PC-9 (cell line): ENCODE measurements at regions of chr1 and their contacts with region 1.

Region 1: DNA sequence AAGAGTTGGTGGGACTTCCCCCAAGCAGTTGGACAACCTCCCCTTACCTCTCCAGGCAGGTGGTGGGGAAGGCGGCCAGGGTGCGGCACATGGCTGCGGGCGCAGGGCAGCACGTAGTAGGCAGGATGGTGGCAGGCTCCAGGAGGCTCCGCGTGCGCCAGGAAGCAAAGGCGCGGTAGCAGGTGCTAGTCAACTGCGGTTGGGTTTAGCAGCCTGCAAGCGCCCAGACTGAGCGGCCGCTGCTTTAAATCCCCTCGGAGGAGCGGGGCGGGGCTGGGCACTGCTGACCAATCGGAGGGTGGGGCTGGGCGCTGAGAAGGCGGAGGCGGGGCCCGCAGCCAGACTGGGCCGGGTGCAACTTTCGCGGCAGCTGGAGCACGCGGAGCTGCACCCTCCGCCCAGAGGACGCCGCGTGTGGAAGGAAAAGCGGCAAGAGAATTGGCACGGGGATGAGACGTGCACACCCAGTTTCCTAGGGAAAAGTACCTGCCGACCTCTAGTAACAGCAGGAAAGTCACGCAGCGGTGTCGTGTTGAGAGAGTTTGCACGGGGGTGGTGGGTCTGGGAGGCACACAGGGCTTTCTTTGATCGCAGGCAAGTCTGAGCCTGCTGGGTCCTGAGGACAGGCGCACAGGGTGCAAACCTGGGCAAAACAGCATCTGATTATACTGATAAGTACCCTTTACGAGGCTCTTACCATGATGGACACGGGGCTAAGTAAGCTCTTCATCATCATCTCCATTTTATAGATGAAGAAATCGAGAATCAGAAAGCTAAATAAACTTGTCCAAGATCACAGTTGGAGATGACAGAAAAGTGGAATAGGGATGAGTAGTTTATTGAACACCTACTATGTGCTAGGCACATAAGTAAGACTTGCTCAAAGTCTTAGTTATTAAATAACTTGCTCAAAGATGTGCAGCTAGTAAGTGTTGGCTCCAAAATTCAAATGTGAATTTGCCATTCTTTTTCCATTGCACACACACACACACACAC is at the start of gene RGS16:
- DNase-seq: peak; percentile 62 to 80
- H3K4me3 ChIP-seq: peak within 1 kb of the TSS; percentile 69
- H3K27ac ChIP-seq: no peak within 1 kb of the TSS
- H3K4me1 ChIP-seq: peaks cover 15% of the 10 kb centered on the region
- H3K27me3 ChIP-seq: no peaks in the 10 kb centered on the region
- CTCF ChIP-seq: no peak
- total RNA-seq, gene RGS16: 0.25 TPM in 1 of 2 replicates, not detected in the other

Region 2: GRCh38 chr1:182446033-182446669 is 158.3 kb before region 1 on chr1:
- CTCF ChIA-PET with region 1: no interaction called
- POLR2A ChIA-PET with region 1: no interaction called
- intact Hi-C with region 1: loop called (anchors 2 kb)
- DNase-seq: peak; percentile 9 to 48
- H3K4me3 ChIP-seq: no peak overlapping the region
- H3K27ac ChIP-seq: no peak overlapping the region
- H3K4me1 ChIP-seq: no peaks in the 10 kb centered on the region; the same call in 1 of the 2 replicates
- H3K27me3 ChIP-seq: no peaks in the 10 kb centered on the region
- CTCF ChIP-seq: peak; percentile 89

Region 3: GRCh38 chr1:182839209-182840065 is 235.0 kb after region 1 on chr1 and contains the start of gene DHX9:
- CTCF ChIA-PET with region 1: no interaction called
- POLR2A ChIA-PET with region 1: no interaction called
- intact Hi-C with region 1: loop called (anchors 5 kb)
- DNase-seq: peak; percentile 74 to 93
- H3K4me3 ChIP-seq: peak within 1 kb of the TSS; percentile 96
- H3K27ac ChIP-seq: peak within 1 kb of the TSS; percentile 68
- H3K4me1 ChIP-seq: peaks cover 24% of the 10 kb centered on the region
- H3K27me3 ChIP-seq: no peaks in the 10 kb centered on the region
- CTCF ChIP-seq: no peak
- total RNA-seq, gene DHX9: 101 and 131 TPM in 2 replicates